ENCODE measurements at regions of chr20 and their contacts with region 1.

Region 1: GRCh38 chr20:34129518-34130162 is 17.6 kb upstream of the EIF2S2 start:
- DNase-seq: peak; percentile 84
- H3K4me3 ChIP-seq: peak overlapping the region; percentile 54
- H3K27ac ChIP-seq: no peak overlapping the region
- H3K4me1 ChIP-seq: peaks cover 13% of the 10 kb centered on the region
- CTCF ChIP-seq: peak; percentile 96

Region 2: DNA sequence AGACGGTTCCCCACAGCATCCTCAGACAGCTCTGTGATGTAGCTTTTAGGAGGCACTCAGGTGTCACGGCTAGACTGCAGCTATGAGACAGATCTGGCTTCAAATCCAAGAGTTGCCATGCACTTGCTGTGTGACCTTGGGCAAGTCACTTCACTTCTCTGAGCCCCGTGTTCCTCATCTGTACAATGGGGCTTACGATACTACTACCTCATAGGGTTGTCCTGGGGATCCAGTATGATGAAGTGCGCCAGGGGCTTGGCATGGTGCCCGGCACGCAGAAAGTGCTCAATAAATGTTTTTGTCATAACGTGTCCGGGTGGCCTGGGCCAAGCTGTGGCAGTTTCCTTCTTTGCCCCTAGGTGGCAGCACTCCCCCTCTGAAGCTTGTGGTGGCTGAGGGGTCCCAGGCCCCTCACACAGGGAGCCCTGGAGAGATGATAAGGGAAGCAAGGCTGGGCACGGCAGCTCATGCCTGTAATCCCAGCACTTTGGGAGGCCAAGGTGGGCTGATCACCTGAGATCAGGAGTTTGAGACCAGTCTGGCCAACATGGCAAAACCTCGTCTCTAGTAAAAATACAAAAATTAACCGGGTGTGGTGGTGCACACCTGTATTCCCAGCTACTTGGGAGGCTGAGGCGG is 337.6 kb before region 1 on chr20:
- CTCF ChIA-PET with region 1: no interaction called
- POLR2A ChIA-PET with region 1: no interaction called
- intact Hi-C with region 1: loop called (anchors 5 kb)
- DNase-seq: peak; percentile 59
- H3K4me3 ChIP-seq: no peak overlapping the region
- H3K27ac ChIP-seq: no peak overlapping the region
- H3K4me1 ChIP-seq: peaks cover 7% of the 10 kb centered on the region
- CTCF ChIP-seq: peak; percentile 91

Region 3: DNA sequence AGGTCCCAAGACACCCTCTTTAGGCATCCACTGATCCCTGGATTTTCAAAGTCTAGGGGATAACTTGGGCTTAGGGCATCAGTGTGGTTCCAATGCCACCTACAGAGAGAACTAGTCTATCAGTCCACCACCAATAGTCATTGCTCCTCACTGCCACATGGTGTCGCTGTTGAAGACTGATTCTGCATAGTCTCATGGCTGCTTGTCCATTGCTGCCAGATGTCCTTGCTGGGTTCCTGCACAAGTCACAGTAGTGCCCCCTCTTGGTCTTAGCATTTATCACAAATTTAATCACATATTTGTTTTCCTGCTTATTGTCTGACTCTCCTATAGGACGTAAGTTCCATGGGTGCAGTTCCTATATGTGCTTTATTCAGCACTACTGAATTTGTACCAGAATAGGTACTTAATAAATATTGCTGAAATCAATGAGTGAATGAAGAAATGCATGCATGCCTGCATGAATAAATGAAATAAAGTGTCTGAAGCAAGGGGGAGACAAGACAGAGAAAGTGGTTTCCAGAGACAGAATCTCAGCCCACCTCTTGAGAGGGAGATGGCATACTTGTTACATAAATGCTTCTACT is 181.8 kb before region 1 on chr20:
- CTCF ChIA-PET with region 1: no interaction called
- POLR2A ChIA-PET with region 1: no interaction called
- intact Hi-C with region 1: loop called (anchors 1 kb)
- DNase-seq: peak; percentile 87
- H3K4me3 ChIP-seq: no peak overlapping the region
- H3K27ac ChIP-seq: no peak overlapping the region
- H3K4me1 ChIP-seq: no peaks in the 10 kb centered on the region
- CTCF ChIP-seq: peak; percentile 100

Region 4: DNA sequence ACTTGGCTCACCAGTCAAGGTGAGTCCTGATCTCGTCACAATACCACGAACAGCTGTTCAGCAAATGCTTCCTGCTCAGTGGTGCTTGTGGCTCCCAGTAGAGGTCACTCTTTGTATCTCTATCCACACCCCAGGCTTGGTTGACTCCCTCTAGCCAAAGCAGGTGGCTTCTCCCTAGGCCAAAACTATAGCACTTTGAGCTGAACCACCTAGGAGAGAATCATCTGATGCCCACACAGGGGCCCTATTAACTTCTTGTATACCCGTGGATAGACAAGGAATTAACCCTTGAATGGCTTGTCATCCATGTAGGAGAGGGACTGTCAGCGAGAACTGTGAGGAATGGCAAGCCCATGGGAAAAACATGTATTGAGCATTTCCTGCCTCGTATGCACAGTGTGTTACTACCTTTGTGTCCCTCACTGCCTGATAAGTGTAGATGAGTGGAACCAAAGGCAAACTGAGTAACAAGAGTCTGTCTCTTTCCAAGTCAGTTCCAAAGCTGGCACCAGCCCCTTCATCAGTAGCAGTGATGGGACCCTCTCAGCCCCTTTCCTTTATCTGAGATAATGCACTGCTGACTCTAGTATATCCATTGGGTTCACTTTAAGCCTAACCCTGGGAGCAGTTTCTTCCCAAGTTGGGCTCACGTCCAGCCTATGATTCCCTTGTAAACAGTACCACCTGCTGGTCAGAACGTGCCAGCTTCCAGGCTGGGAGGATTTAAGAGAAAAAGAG is 60.1 kb before region 1 on chr20:
- CTCF ChIA-PET with region 1: no interaction called
- POLR2A ChIA-PET with region 1: interaction called, 3 read pairs
- intact Hi-C with region 1: loop called (anchors 1 kb)
- DNase-seq: peak; percentile 84
- H3K4me3 ChIP-seq: no peak overlapping the region
- H3K27ac ChIP-seq: peak overlapping the region; percentile 38
- H3K4me1 ChIP-seq: peaks cover 21% of the 10 kb centered on the region
- CTCF ChIP-seq: peak; percentile 93

Region 5: DNA sequence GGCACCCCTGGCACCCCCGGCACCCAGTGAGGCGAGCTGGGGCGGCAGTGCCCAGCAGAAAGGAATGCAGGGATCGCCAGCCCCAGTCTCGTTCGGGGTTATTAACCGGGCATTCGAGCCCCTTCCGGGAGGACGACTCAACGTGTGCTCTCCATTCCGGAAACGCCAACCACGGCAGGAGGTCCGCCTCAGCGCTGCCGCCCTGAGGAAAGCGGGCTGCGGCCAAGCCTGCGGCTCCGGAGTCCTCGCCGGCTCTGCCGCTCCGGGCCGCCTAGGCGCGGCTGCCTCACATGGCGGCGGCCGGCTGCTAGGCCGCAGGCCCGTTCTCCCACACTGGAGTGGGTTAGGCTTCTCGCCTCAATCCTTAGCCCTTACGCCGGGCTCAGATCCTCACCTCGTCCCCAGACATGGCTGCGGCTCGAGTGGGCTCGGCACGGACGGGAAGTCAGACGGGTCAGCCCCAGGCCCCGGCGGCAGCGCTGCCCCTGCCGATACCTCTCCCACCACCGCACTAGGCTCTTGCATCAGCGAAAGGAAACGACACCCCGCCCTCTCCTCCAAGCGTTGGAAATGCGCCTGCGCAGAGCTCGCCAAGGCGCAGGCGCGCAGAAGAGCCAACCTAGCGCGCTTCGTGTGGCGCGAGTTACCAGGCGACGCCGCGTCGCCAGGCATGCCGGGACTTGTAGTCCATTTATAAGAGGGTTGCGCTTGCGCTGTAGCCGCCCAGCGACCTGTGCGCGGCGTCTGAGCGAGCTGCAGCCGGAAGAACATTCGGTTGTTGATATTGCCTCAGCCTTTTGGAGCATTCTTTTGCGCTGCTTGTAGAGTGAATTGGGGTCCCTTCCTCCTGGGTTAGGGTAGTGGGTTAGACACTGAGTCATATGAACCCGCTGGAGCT is 17.7 kb before region 1 on chr20 and contains the start of gene EIF2S2:
- CTCF ChIA-PET with region 1: no interaction called
- POLR2A ChIA-PET with region 1: interaction called, 9 read pairs
- intact Hi-C with region 1: loop called (anchors 1 kb)
- DNase-seq: peak; percentile 100
- H3K4me3 ChIP-seq: peak within 1 kb of the TSS; percentile 98
- H3K27ac ChIP-seq: peak within 1 kb of the TSS; percentile 81
- H3K4me1 ChIP-seq: peaks cover 40% of the 10 kb centered on the region
- CTCF ChIP-seq: no peak
- total RNA-seq, gene EIF2S2: 104 and 112 TPM in 2 replicates

Region 6: DNA sequence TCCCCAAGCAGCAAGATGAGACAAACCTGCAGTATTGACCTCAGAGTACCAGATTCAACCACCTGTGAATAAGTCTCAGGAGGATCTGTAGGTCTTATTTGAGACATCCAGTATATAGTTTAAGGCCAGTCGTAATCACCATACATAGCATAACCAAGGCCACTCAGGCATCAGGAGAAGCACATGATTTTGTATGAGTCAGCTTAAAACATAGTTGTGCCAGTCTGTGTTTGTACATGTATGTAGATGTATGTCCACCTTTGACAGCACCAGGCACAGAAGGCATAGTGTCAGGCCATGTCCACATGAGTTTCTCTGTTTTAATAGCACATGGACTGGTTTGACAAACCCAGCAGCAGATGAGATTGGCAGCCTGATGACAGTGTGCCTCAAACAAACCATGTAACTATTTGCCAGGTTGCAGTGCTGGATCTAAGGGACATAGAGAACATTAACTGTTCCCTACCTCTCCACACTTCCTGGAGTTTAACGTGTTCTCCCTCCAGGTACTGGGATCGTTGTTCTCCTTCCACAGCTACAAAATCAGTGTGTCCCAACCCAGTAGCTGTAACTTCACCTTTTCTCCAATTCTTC is 103.0 kb after region 1 on chr20:
- CTCF ChIA-PET with region 1: no interaction called
- POLR2A ChIA-PET with region 1: no interaction called
- intact Hi-C with region 1: no loop called
- DNase-seq: no peak
- H3K4me3 ChIP-seq: no peak overlapping the region
- H3K27ac ChIP-seq: no peak overlapping the region
- H3K4me1 ChIP-seq: no peaks in the 10 kb centered on the region
- CTCF ChIP-seq: no peak